ENCODE measurements at regions of chr2 and their contacts with region 1.

Region 1: GRCh38 chr2:218395797-218396687 is 3.6 kb upstream of the CTDSP1 start:
- DNase-seq: peak; percentile 93
- H3K4me3 Mint-ChIP-seq: peak overlapping the region; percentile 86
- H3K27ac Mint-ChIP-seq: peak overlapping the region; percentile 93
- H3K4me1 Mint-ChIP-seq: peaks cover 30% of the 10 kb centered on the region
- H3K27me3 Mint-ChIP-seq: no peaks in the 10 kb centered on the region

Region 2: DNA sequence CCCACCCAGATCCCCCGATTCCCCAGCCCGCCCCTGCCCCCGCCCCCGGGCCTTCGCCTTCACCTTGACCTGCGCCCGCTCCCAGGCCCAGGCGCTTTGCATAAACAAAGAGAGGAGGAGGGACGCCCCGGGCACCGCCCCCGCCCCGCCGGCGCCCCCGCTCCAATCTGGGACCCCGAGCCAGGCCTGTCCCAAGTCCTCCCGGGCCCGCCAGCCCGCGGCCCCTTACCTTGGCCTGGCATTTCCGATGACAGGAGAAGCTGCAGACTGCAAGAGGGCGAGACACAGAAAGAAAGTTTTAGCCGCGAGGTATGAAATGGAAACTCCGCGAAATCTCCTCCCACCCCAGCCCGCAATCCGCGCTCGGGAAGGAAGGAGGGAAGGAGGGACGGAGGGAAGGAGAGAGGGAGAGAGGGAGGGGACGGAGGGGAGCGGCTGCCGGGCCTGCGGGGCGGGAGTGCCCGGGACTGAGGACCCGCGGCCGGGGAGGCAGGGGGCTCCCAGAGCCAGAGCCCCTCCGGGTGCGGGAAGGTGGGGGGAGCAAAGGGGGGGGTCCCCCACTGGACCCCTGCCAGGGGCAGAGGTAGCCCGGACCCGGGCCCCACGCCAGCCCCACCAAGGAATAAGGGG is 417.4 kb before region 1 on chr2:
- intact Hi-C with region 1: no loop called
- DNase-seq: no peak
- H3K4me3 Mint-ChIP-seq: no peak overlapping the region
- H3K27ac Mint-ChIP-seq: no peak overlapping the region
- H3K4me1 Mint-ChIP-seq: no peaks in the 10 kb centered on the region
- H3K27me3 Mint-ChIP-seq: peaks cover 2% of the 10 kb centered on the region

Region 3: DNA sequence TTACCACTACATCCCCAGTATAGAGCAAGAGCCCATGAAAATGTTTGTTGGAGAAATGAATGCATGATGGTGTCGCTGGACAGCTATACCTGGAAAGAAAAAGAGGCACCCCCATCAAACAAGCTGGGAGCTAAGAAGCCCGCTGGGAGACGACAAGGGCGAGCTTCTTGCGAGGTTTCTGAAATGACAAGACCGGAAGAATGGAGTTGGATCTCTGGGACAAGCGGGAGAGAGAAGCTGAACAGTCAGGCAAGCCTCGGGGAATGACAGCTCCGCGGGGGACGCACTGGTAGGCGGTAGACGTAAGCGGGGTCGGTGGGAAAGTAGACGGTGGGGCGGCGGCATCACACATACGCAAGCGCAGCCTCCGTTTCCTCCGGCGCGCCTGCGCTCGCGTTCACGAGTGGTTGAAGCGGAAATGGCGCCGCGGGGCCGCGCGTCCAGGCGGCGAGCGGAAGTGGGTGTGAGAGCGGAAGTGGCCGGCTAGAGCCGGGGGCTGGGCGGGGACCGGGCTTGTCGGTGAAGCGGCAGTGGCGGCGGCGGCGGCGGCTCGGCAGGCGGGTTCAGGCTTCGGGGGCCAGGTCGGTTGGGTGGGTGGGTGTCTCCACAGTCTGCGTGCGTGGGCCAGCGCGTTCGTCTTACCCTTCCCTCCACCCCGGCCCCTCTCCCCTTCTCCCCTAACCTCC is 179.2 kb before region 1 on chr2 and contains the start of gene ARPC2:
- intact Hi-C with region 1: loop called (anchors 1 kb)
- DNase-seq: peak; percentile 95
- H3K4me3 Mint-ChIP-seq: peak within 1 kb of the TSS; percentile 89
- H3K27ac Mint-ChIP-seq: peak within 1 kb of the TSS; percentile 95
- H3K4me1 Mint-ChIP-seq: peaks cover 35% of the 10 kb centered on the region
- H3K27me3 Mint-ChIP-seq: peaks cover 2% of the 10 kb centered on the region
- total RNA-seq, gene ARPC2: 639 and 643 TPM in 2 replicates

Region 4: GRCh38 chr2:218286570-218287459 is 109.2 kb before region 1 on chr2:
- intact Hi-C with region 1: loop called (anchors 1 kb)
- DNase-seq: peak; percentile 82
- H3K4me3 Mint-ChIP-seq: peak overlapping the region; percentile 85
- H3K27ac Mint-ChIP-seq: peak overlapping the region; percentile 98
- H3K4me1 Mint-ChIP-seq: peaks cover 69% of the 10 kb centered on the region
- H3K27me3 Mint-ChIP-seq: no peaks in the 10 kb centered on the region

Region 5: DNA sequence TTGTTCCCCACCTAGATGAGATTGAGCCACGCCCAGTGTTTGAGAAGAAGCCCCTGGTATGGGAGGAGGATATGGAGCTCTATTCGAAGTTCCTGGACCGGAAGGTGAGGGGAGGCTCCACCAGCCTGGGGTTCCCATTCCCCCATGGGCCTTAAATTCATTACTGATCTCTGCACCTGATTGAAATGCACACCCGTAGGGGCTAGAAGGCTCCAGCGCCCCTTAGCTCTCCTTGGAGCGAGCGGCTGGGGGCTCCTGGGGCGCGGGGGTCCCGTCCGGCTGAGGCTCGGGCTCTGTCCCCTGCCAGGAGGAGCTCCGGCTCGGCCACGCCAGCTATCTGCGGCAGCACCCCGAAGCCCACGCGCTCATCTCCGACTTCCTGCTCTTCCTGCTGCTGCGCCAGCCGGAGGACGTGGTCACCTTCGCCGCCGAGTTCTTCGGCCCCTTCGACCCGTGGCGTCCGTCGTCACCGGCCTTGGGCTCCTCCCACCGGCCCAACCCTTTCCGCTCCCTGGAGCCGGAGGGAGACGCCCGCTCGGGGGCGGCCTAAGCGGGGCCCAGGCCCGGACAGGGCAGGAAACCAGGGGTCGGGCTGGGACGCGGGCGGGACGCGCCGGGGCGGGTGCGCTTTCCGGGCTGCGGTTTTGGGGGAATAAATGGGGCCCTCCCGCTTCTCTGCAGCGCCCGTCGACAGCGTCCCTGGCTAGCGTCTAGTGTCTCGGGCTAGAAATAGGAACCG is 28.5 kb before region 1 on chr2:
- intact Hi-C with region 1: loop called (anchors 1 kb)
- DNase-seq: peak; percentile 63
- H3K4me3 Mint-ChIP-seq: peak overlapping the region; percentile 74
- H3K27ac Mint-ChIP-seq: peak overlapping the region; percentile 74
- H3K4me1 Mint-ChIP-seq: peaks cover 12% of the 10 kb centered on the region
- H3K27me3 Mint-ChIP-seq: peaks cover 14% of the 10 kb centered on the region

Region 6: DNA sequence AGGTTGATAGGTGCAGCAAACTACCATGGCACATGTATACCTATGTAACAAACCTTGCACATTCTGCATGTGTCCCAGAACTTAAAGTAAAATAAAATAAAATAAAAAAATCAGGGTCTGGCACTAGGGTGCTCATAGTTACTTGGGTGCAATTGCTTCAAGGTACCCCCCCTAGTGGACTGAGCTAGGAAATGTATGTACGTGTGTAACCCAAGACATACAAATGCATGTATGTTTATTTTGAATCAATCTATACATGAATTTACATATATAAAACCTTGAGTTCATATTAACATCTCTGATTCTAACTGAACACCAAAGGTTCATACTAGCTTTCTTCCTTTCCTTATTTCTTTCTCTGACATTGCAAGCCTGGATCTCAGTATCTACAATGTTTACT is 120.6 kb after region 1 on chr2:
- intact Hi-C with region 1: loop called (anchors 5 kb)
- DNase-seq: no peak
- H3K4me3 Mint-ChIP-seq: no peak overlapping the region
- H3K27ac Mint-ChIP-seq: no peak overlapping the region
- H3K4me1 Mint-ChIP-seq: peaks cover 21% of the 10 kb centered on the region
- H3K27me3 Mint-ChIP-seq: no peaks in the 10 kb centered on the region

Region 7: DNA sequence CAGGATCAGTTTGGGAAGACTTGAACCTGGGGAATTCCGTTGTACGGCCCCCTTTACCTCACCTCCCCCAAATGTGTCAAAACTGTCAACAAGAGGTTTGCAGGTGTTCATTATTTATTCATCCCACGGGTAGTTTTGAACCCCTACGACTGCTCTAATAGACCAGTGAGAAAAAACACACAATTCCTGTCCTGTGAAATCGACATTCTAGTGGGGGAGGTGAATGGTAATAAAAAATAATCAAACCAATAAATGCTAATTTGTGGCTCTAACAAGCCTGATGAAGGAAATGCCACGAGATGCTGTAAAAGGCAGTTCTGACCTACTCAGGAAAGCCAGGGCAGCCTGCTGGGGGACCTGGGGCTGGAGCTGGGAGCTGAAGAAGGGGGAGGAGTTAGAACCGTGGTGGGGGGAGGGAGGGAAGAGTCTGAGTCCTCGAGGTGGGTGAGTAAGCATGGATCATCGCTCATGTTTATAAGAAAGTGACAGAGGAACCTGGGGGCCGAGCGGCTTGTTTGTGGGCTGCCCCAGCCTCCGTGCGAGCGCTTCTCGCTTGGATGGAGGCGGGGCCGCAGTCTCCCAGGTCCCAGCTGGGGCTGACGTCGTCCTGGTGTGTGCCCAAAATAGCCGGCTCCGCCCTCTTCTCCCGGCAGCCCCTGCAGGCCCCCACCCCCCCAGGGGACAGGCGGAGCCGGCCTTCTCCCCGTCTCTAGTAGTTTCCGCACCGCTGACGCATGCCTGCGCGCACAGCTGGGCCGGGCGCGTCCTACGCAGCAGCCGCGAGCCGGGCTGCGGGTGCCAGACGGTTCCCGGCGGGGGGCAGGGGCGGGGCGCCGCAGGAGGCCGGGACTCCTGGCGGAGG is 882.8 kb after region 1 on chr2 and contains the start of gene DNAJB2:
- intact Hi-C with region 1: loop called (anchors 1 kb)
- DNase-seq: peak; percentile 98
- H3K4me3 Mint-ChIP-seq: peak within 1 kb of the TSS; percentile 85
- H3K27ac Mint-ChIP-seq: peak within 1 kb of the TSS; percentile 91
- H3K4me1 Mint-ChIP-seq: peaks cover 39% of the 10 kb centered on the region
- H3K27me3 Mint-ChIP-seq: peaks cover 3% of the 10 kb centered on the region
- total RNA-seq, gene DNAJB2: 49.8 and 55.6 TPM in 2 replicates

Measured in activated T-helper 2 cell treated with anti-CD3 and anti-CD28 coated beads, Interferon-gamma antibody, Interleukin-2, Interleukin-4, amounts not matched to agents 10 μg/mL and 5 μg/mL and 100 μg/mL, durations not matched to agents 14 hours and 24 hours and 36 hours (primary cell).